ENCODE measurements at regions of chr12 and their contacts with region 1.

Region 1: GRCh38 chr12:106357549-106358395 is at the start of gene POLR3B:
- DNase-seq: peak; percentile 94 to 98 (median 96)
- ATAC-seq: peak; percentile 94 to 97 (median 95)
- H3K4me3 ChIP-seq: peak within 1 kb of the TSS; percentile 40 to 86 (median 70)
- H3K27ac ChIP-seq: peak within 1 kb of the TSS; percentile 81 to 99 (median 96)
- H3K4me1 ChIP-seq: peaks cover 0 to 26% (median 12%) of the 10 kb centered on the region in 12 donors
- H3K27me3 ChIP-seq: no peaks in the 10 kb centered on the region
- CTCF ChIP-seq: peak; percentile 81 to 97 (median 90)
- POLR2A ChIP-seq: peak in 1 of 2 donors; percentile 87
- total RNA-seq, gene POLR3B: 6.4 to 12.3 (median 9.3) TPM

Region 2: GRCh38 chr12:106302401-106303201 is 55.2 kb before region 1 on chr12 and contains the start of gene TCP11L2:
- intact Hi-C with region 1: loop called in 1 of 10 experiments (anchors 5 kb)
- DNase-seq: peak; percentile 89 to 94 (median 92)
- ATAC-seq: peak; percentile 66 to 85 (median 80)
- H3K4me3 ChIP-seq: peak within 1 kb of the TSS; percentile 80 to 97 (median 94)
- H3K27ac ChIP-seq: peak within 1 kb of the TSS; percentile 92 to 100 (median 98)
- H3K4me1 ChIP-seq: peaks cover 8 to 72% (median 63%) of the 10 kb centered on the region in 12 donors
- H3K27me3 ChIP-seq: no peaks in the 10 kb centered on the region
- CTCF ChIP-seq: no peak
- POLR2A ChIP-seq: peak in 1 of 2 donors; percentile 82
- total RNA-seq, gene TCP11L2: 60.8 to 147 (median 113) TPM

Measured in heart left ventricle (tissue), 16 donors.